Lower lobe of right lung (tissue), 2 donors: ENCODE measurements at regions of chr5 and their contacts with region 1.

Region 1: GRCh38 chr5:142699184-142699720 is 13.4 kb upstream of the FGF1 start:
- DNase-seq: peak; percentile 84
- ATAC-seq: peak; percentile 96 to 97
- H3K4me3 ChIP-seq: no peak overlapping the region
- H3K27ac ChIP-seq: no peak overlapping the region
- H3K4me1 ChIP-seq: peaks cover 20% of the 10 kb centered on the region
- H3K27me3 ChIP-seq: no peaks in the 10 kb centered on the region
- CTCF ChIP-seq: peak; percentile 96

Region 2: DNA sequence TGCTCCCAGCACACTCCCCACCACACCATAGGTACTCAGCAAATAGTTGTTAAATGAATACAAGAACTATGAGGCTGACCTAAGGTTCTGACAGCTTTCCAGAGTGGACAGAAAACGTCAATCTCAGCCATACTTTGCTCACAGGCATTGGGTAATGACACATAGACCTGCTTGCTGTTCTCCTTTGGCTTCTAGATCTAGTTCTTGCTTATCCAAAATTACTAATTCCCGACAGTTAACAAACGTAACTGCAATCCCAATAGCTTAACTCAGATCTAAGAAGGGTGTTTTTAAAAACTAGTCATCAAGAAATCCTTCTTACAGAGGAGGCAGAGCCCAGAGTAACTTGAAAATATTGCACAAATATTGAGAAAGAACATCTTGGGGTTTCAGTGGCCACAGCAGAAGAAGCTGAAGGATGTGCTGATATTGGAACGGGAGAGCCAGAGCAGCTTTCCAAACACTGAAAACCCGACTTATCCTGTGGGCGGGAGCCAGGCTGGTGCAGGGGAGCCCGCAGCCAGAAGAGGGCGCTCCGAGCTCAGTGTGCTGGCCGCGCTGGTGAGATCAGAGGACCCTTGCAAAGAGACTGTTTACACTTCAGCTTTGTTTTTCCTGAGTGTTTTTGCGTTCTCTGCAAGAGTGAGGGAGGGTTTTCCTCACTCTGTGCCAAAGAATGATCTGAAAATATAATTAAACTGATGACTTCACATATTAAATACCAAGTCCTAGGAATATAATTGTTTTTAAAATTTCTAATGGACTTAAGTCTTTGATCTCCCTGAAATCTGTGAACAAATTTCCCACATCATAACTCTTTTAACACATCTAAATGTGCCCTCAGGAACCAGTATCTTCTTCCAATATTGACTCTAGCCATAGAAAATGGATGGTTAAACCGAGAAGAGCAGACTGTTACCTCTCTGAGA is 43.6 kb before region 1 on chr5:
- intact Hi-C with region 1: loop called (anchors 5 kb)
- DNase-seq: peak; percentile 85
- ATAC-seq: peak; percentile 93 to 94
- H3K4me3 ChIP-seq: no peak overlapping the region
- H3K27ac ChIP-seq: peak overlapping the region; percentile 36
- H3K4me1 ChIP-seq: peaks cover 9% of the 10 kb centered on the region
- H3K27me3 ChIP-seq: no peaks in the 10 kb centered on the region
- CTCF ChIP-seq: peak; percentile 100